ENCODE measurements at regions of chr6 and their contacts with region 1.

Region 1: GRCh38 chr6:127120787-127121636 is 2.5 kb downstream of the RSPO3 start:
- DNase-seq: peak; percentile 70
- ATAC-seq: peak; percentile 83

Region 2: GRCh38 chr6:126033696-126034095 is 1087.3 kb before region 1 on chr6:
- intact Hi-C with region 1: loop called (anchors 5 kb)
- DNase-seq: no peak
- ATAC-seq: peak; percentile 91

Region 3: GRCh38 chr6:126804332-126805064 is 316.5 kb before region 1 on chr6:
- intact Hi-C with region 1: loop called (anchors 5 kb)
- DNase-seq: no peak
- ATAC-seq: peak; percentile 34

Region 4: GRCh38 chr6:127136786-127137185 is 15.8 kb after region 1 on chr6:
- intact Hi-C with region 1: no loop called
- DNase-seq: no peak
- ATAC-seq: no peak

Region 5: DNA sequence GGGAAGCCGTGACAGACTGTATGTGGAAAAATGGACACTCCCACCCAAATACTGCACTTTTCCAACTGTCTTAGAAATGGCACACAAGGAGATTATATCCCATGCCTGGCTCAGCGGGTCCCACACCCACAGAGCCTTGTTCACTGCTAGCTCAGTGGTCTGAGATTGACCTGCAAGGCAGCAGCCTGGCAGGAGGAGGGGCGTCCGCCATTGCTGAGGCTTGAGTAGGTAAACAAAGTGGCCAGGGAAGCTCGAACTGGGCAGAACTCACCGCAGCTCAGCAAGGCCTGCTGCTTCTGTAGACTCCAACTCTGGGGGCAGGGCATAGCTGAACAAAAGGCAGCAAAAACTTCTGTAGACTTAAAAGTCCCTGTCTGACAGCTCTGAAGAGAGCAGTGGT is 134.3 kb after region 1 on chr6:
- intact Hi-C with region 1: no loop called
- DNase-seq: no peak
- ATAC-seq: no peak